Naive thymus-derived CD4-positive, alpha-beta T cell (primary cell): ENCODE measurements at regions of chr22 and their contacts with region 1.

Region 1: GRCh38 chr22:32144496-32145274 is 14.4 kb downstream of the C22orf42 start:
- DNase-seq: peak in 6 of 9 donors; percentile 16 to 62 (median 36)
- ATAC-seq: peak; percentile 83
- H3K4me3 ChIP-seq: no peak overlapping the region
- H3K4me3 Mint-ChIP-seq: peak overlapping the region in 7 of 10 donors; percentile 1 to 61 (median 26)
- H3K27ac ChIP-seq: no peak overlapping the region
- H3K27ac Mint-ChIP-seq: peak overlapping the region; percentile 1 to 90 (median 40)
- H3K4me1 ChIP-seq: peaks cover 0 to 8% of the 10 kb centered on the region in 2 donors
- H3K4me1 Mint-ChIP-seq: peaks cover 22 to 52% (median 36%) of the 10 kb centered on the region in 7 donors
- H3K27me3 ChIP-seq: no peaks in the 10 kb centered on the region
- H3K27me3 Mint-ChIP-seq: peaks cover 0 to 4% (median 0%) of the 10 kb centered on the region in 5 donors

Region 2: GRCh38 chr22:31891366-31892079 is 253.2 kb before region 1 on chr22:
- CTCF ChIA-PET with region 1: no interaction called
- POLR2A ChIA-PET with region 1: no interaction called
- intact Hi-C with region 1: no loop called
- DNase-seq: no peak
- ATAC-seq: no peak
- H3K4me3 ChIP-seq: no peak overlapping the region
- H3K4me3 Mint-ChIP-seq: no peak overlapping the region
- H3K27ac ChIP-seq: no peak overlapping the region
- H3K27ac Mint-ChIP-seq: no peak overlapping the region
- H3K4me1 ChIP-seq: no peaks in the 10 kb centered on the region
- H3K4me1 Mint-ChIP-seq: peaks cover 0 to 6% (median 0%) of the 10 kb centered on the region in 7 donors
- H3K27me3 ChIP-seq: no peaks in the 10 kb centered on the region
- H3K27me3 Mint-ChIP-seq: no peaks in the 10 kb centered on the region

Region 3: DNA sequence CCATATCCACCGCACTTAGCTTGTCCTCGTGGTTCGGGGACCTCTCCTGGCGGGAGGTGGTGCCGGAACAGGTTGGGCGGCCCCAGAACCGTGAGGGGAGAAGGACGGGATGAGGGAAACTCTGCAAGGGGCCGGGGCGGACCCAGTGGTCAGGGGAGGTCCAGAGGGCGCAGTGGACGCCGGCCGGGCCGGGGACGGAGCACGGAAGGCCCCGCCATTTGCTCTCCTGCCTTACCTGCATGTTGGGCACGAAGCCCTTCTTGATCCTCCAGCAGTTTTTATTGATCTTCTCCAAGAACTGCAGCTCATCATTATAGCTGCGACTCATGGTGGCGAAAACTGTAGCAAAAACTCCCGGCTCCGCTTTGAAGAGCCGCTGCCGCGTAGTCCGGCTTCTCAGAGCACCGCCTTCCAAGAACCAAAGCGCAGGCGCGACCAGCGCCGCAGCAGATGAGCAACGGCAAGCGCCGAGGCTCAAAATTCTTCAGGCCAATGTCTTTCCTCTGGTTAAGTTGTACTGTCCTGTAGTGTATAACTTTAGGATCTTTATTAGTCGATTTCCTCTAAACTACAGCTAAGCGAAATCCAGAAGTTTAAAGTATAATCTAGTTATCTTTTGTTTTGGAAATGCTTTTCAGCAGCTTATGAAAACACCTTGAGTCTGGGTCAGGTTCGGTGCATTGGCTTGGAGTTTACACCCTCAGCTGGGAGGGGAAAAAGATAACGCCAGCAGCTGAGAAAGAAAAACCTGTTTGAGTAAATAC is 267.3 kb after region 1 on chr22 and contains the start of gene RTCB:
- CTCF ChIA-PET with region 1: no interaction called
- POLR2A ChIA-PET with region 1: no interaction called
- intact Hi-C with region 1: loop called (anchors 5 kb)
- DNase-seq: peak; percentile 86 to 93 (median 90)
- ATAC-seq: peak; percentile 94
- H3K4me3 ChIP-seq: peak within 1 kb of the TSS; percentile 89
- H3K4me3 Mint-ChIP-seq: peak within 1 kb of the TSS; percentile 96 to 99 (median 98)
- H3K27ac ChIP-seq: peak within 1 kb of the TSS; percentile 92
- H3K27ac Mint-ChIP-seq: peak within 1 kb of the TSS; percentile 90 to 98 (median 96)
- H3K4me1 ChIP-seq: peaks cover 12 to 14% of the 10 kb centered on the region in 2 donors
- H3K4me1 Mint-ChIP-seq: peaks cover 22 to 62% (median 58%) of the 10 kb centered on the region in 7 donors
- H3K27me3 ChIP-seq: no peaks in the 10 kb centered on the region
- H3K27me3 Mint-ChIP-seq: peaks cover 0 to 11% (median 0%) of the 10 kb centered on the region in 5 donors
- total RNA-seq, gene RTCB: 41.6 to 59.7 (median 54.6) TPM